Panc1 (cell line): ENCODE measurements at regions of chr7 and their contacts with region 1.

Region 1: GRCh38 chr7:43925984-43926797 is at the start of gene UBE2D4:
- DNase-seq: peak; percentile 54
- ATAC-seq: peak; percentile 98
- H3K4me3 ChIP-seq: peak within 1 kb of the TSS; percentile 60 to 96
- H3K27ac ChIP-seq: peak within 1 kb of the TSS; percentile 87
- H3K4me1 ChIP-seq: no peaks in the 10 kb centered on the region
- H3K27me3 ChIP-seq: no peaks in the 10 kb centered on the region
- CTCF ChIP-seq: no peak
- total RNA-seq, gene UBE2D4: 35.9 TPM

Region 2: DNA sequence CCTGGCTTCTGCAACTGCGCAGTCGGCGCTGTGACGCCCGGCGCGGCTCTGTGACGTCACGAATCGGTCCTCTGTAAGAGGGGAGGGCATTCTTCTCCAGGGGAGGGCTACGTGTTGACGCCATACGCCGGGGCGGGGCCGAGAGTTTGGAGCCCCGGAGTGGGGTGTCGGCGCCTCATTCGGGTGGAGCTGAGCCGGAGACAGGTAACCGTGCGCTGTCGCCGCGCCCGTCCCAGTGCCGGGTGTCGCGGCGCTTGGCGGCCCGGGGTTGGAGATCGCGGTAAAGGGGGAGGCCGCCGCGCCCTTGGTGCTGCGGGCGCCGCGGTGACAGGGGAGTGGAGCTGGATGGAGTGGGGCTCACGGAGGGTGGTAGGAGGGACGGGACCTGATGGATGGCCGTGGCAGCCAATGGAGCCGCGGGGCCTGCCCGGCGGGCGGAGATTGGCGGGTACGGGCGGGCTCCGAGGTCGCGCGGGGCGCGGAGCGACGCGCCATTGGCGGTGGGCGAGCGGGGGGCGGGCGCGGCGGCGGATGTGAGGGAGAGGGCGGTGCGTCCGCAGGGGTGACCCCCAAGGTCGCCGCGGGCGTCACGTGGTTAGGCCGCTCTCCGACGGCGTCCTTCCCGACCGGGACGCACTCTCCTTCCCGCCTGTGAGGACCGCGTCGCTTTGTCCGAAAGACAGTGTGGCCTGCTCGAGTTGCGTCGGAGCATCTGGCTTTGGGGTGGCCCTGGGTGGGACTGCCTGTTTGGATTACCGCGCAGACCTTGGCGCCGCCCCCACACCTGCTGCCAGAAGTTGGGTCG is 680.5 kb after region 1 on chr7 and contains the start of gene OGDH:
- CTCF ChIA-PET with region 1: no interaction called
- POLR2A ChIA-PET with region 1: interaction called, 11 read pairs
- in situ Hi-C with region 1: no loop called
- intact Hi-C with region 1: no loop called
- DNase-seq: peak; percentile 93
- ATAC-seq: peak; percentile 99
- H3K4me3 ChIP-seq: peak within 1 kb of the TSS; percentile 62 to 95
- H3K27ac ChIP-seq: peak within 1 kb of the TSS; percentile 94
- H3K4me1 ChIP-seq: peaks cover 8% of the 10 kb centered on the region; the same call in 1 of the 2 replicates
- H3K27me3 ChIP-seq: no peaks in the 10 kb centered on the region
- CTCF ChIP-seq: no peak
- total RNA-seq, gene OGDH: 166 TPM